CD4-positive, alpha-beta memory T cell (primary cell): ENCODE measurements at regions of chr2 and their contacts with region 1.

Region 1: GRCh38 chr2:98771721-98772524 is 41.0 kb upstream of the MGAT4A start:
- DNase-seq: peak; percentile 82 to 92 (median 89)
- H3K4me3 ChIP-seq: peak overlapping the region; percentile 31 to 57
- H3K4me3 Mint-ChIP-seq: peak overlapping the region; percentile 92 to 99 (median 94)
- H3K27ac ChIP-seq: peak overlapping the region; percentile 63
- H3K27ac Mint-ChIP-seq: peak overlapping the region; percentile 89 to 100 (median 98)
- H3K4me1 ChIP-seq: peaks cover 79% of the 10 kb centered on the region
- H3K4me1 Mint-ChIP-seq: peaks cover 60 to 93% (median 76%) of the 10 kb centered on the region in 4 donors
- H3K27me3 ChIP-seq: no peaks in the 10 kb centered on the region
- H3K27me3 Mint-ChIP-seq: no peaks in the 10 kb centered on the region

Region 2: GRCh38 chr2:98615481-98615880 is 156.4 kb before region 1 on chr2:
- CTCF ChIA-PET with region 1: no interaction called
- POLR2A ChIA-PET with region 1: no interaction called
- intact Hi-C with region 1: no loop called
- DNase-seq: peak in 1 of 5 donors; percentile 19
- H3K4me3 ChIP-seq: no peak overlapping the region
- H3K4me3 Mint-ChIP-seq: peak overlapping the region in 3 of 8 donors; percentile 2 to 55 (median 6)
- H3K27ac ChIP-seq: no peak overlapping the region
- H3K27ac Mint-ChIP-seq: peak overlapping the region; percentile 64 to 93 (median 74)
- H3K4me1 ChIP-seq: peaks cover 12% of the 10 kb centered on the region
- H3K4me1 Mint-ChIP-seq: peaks cover 31 to 47% (median 37%) of the 10 kb centered on the region in 4 donors
- H3K27me3 ChIP-seq: no peaks in the 10 kb centered on the region
- H3K27me3 Mint-ChIP-seq: no peaks in the 10 kb centered on the region

Region 3: DNA sequence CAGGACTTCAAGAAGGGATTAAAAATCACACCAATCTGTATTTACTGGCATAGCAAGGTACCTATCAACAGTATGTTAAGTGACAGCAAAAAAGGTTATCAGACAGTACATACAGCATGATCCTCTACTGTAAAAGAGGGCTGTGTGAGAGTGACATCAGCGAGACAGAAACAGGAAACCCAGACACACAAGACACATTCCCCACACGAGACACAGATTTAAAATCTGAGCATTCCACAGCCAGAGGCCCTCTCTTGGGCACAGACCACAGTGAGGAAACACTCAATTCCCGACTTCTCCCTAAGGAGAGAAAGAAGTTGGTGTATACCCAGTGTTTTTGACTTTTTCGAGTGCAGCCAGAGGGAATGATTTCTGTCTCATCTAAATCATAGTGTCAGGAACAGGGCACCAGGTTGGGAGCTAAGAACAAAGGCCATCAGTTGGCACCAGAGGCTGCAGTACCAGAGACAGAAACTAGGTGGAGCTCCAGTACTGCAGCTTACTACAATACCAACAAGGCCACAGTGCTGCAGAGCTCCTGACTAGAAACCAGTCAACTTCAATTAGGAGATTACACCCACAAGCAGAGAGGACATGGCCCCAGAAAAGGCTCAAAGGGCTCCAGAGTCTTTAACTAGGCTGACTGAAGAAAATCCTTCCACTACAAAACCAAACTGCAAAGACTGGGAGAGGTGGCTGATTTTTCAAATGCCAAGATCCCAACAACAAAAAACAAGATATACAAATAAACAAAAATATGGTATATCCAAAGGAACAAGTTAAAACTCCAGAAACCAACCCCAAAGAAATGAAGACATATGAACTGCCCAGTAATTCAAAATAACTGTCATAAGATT is 122.6 kb before region 1 on chr2:
- CTCF ChIA-PET with region 1: interaction called, 8 read pairs
- POLR2A ChIA-PET with region 1: interaction called, 173 read pairs
- intact Hi-C with region 1: no loop called
- DNase-seq: peak; percentile 79 to 85 (median 81)
- H3K4me3 ChIP-seq: no peak overlapping the region
- H3K4me3 Mint-ChIP-seq: peak overlapping the region in 5 of 8 donors; percentile 10 to 73 (median 33)
- H3K27ac ChIP-seq: peak overlapping the region; percentile 10
- H3K27ac Mint-ChIP-seq: peak overlapping the region; percentile 66 to 89 (median 84)
- H3K4me1 ChIP-seq: peaks cover 52% of the 10 kb centered on the region
- H3K4me1 Mint-ChIP-seq: peaks cover 45 to 60% (median 54%) of the 10 kb centered on the region in 4 donors
- H3K27me3 ChIP-seq: no peaks in the 10 kb centered on the region
- H3K27me3 Mint-ChIP-seq: no peaks in the 10 kb centered on the region

Region 4: DNA sequence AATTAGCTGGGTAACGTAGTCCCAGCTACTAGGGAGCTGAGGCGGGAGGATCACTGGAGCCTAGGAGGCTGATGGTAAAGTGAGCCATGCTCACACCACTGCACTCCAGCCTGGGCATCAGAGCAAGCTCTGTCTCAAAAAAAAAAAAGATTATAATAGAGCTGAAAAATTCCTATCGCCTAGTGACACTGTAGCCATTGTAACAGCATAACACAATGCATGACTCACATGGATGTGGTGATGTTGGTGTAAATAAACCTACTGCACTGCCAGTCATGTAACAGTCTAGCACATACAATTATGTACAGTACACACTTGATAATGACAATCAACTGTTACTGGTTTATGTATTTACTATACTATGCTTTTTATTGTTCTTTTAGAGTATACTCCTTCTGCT is 80.6 kb before region 1 on chr2:
- CTCF ChIA-PET with region 1: no interaction called
- POLR2A ChIA-PET with region 1: interaction called, 10 read pairs
- intact Hi-C with region 1: no loop called
- DNase-seq: peak in 1 of 5 donors; percentile 57
- H3K4me3 ChIP-seq: no peak overlapping the region
- H3K4me3 Mint-ChIP-seq: peak overlapping the region in 6 of 8 donors; percentile 21 to 60 (median 35)
- H3K27ac ChIP-seq: peak overlapping the region; percentile 8
- H3K27ac Mint-ChIP-seq: peak overlapping the region; percentile 36 to 94 (median 76)
- H3K4me1 ChIP-seq: peaks cover 97% of the 10 kb centered on the region
- H3K4me1 Mint-ChIP-seq: peaks cover 68 to 94% (median 81%) of the 10 kb centered on the region in 4 donors
- H3K27me3 ChIP-seq: no peaks in the 10 kb centered on the region
- H3K27me3 Mint-ChIP-seq: no peaks in the 10 kb centered on the region

Region 5: DNA sequence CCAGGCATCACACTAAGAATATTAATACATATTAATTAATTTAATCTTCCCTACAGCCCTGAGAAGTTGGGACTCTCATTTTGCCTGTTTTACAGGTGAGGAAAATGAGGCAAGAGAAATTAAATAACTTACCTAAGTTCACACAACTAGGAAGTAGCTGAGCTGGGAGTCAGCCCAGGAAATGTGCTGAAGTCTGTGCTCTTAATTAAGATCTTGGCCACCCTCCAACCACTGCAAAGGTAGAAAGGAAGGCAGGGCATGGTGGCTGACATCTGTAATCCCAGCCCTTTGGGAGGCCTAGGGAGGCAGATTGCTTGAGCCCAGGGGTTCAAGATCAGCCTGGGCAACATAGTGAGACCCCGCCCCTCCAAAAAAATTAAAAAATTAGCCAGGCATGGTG is 28.1 kb before region 1 on chr2:
- CTCF ChIA-PET with region 1: interaction called, 5 read pairs
- POLR2A ChIA-PET with region 1: interaction called, 565 read pairs
- intact Hi-C with region 1: no loop called
- DNase-seq: no peak
- H3K4me3 ChIP-seq: no peak overlapping the region
- H3K4me3 Mint-ChIP-seq: peak overlapping the region in 6 of 8 donors; percentile 8 to 59 (median 40)
- H3K27ac ChIP-seq: no peak overlapping the region
- H3K27ac Mint-ChIP-seq: peak overlapping the region in 5 of 7 donors; percentile 23 to 86 (median 70)
- H3K4me1 ChIP-seq: peaks cover 45% of the 10 kb centered on the region
- H3K4me1 Mint-ChIP-seq: peaks cover 32 to 85% (median 46%) of the 10 kb centered on the region in 4 donors
- H3K27me3 ChIP-seq: no peaks in the 10 kb centered on the region
- H3K27me3 Mint-ChIP-seq: no peaks in the 10 kb centered on the region

Region 6: GRCh38 chr2:98805412-98806171 is 33.7 kb after region 1 on chr2:
- CTCF ChIA-PET with region 1: interaction called, 4 read pairs
- POLR2A ChIA-PET with region 1: interaction called, 6 read pairs
- intact Hi-C with region 1: loop called (anchors 5 kb)
- DNase-seq: no peak
- H3K4me3 ChIP-seq: no peak overlapping the region
- H3K4me3 Mint-ChIP-seq: peak overlapping the region in 1 of 8 donors; percentile 59
- H3K27ac ChIP-seq: no peak overlapping the region
- H3K27ac Mint-ChIP-seq: peak overlapping the region in 1 of 7 donors; percentile 23
- H3K4me1 ChIP-seq: peaks cover 11% of the 10 kb centered on the region
- H3K4me1 Mint-ChIP-seq: peaks cover 8 to 15% (median 13%) of the 10 kb centered on the region in 4 donors
- H3K27me3 ChIP-seq: no peaks in the 10 kb centered on the region
- H3K27me3 Mint-ChIP-seq: no peaks in the 10 kb centered on the region

Region 7: DNA sequence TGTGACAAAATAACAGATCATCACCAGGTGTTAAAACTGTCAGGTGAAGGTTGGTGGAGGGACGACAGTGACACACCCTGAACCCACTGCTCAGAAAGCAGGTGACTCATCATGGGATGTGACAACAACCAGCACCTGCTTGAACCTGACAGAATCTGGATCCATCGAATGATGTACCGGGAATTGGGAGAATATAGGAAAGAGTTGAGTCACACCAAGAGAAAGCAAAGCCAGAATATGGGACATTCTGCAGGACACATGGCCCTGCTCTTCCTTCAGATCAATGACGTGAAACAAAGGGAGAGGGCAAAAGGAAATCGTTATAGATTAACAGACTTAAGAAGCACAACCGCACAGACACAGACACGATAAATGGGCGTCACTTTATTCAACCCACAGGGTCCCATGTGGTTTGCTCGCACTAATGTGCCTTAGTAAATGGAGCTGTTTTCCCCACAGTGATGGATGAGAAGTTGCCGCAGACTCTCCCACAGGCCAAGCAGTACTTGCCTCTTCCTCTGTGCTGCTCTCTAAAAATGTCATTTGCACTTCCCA is 64.0 kb after region 1 on chr2:
- CTCF ChIA-PET with region 1: interaction called, 5 read pairs
- POLR2A ChIA-PET with region 1: interaction called, 19 read pairs
- intact Hi-C with region 1: loop called (anchors 2 kb)
- DNase-seq: peak; percentile 66 to 88 (median 79)
- H3K4me3 ChIP-seq: peak overlapping the region in 1 of 2 donors; percentile 22
- H3K4me3 Mint-ChIP-seq: peak overlapping the region; percentile 43 to 77 (median 64)
- H3K27ac ChIP-seq: peak overlapping the region; percentile 54
- H3K27ac Mint-ChIP-seq: peak overlapping the region; percentile 88 to 99 (median 97)
- H3K4me1 ChIP-seq: peaks cover 40% of the 10 kb centered on the region
- H3K4me1 Mint-ChIP-seq: peaks cover 36 to 53% (median 44%) of the 10 kb centered on the region in 4 donors
- H3K27me3 ChIP-seq: no peaks in the 10 kb centered on the region
- H3K27me3 Mint-ChIP-seq: no peaks in the 10 kb centered on the region